Activated CD4-positive, alpha-beta memory T cell treated with anti-CD3 and anti-CD28 coated beads for 36 hours (primary cell): ENCODE measurements at regions of chr22 and their contacts with region 1.

Region 1: DNA sequence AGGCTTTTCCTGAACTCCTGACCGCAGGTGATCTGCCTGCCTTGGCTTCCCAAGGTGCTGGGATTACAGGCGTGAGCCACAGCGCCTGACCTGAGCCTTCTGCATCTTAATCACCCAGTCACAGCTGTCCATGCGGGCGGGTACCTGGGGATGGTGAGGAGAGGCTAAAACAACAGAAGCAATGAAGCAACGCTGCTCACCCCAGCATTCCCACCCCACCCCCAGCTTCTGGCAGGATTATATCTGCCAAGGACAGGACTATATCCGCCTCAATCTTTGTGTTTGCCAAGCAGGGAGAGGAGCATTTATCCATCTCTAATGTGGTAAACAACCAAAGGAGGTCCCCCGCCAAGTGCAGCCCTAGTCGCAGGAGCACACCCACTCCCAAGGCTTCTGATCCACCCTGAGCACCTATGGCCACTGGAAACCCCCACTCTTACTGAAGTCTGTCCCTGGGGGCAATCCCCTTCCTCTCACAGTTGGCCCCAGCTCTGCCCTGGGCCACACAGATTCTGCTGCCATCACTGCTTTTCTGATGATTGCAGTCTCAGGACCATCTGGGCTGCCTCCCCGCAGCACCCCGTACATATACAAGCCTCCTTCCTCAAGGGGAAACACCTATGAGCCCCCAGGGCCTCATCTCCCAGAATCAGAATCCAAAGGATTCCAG is 8.8 kb upstream of the LGALS2 start:
- DNase-seq: no peak
- H3K4me3 Mint-ChIP-seq: no peak overlapping the region
- H3K27ac Mint-ChIP-seq: no peak overlapping the region
- H3K4me1 Mint-ChIP-seq: peaks cover 10% of the 10 kb centered on the region
- H3K27me3 Mint-ChIP-seq: peaks cover 3% of the 10 kb centered on the region

Region 2: GRCh38 chr22:37472418-37473006 is 116.2 kb before region 1 on chr22:
- CTCF ChIA-PET with region 1: interaction called, 10 read pairs
- POLR2A ChIA-PET with region 1: no interaction called
- intact Hi-C with region 1: no loop called
- DNase-seq: peak; percentile 52
- H3K4me3 Mint-ChIP-seq: no peak overlapping the region
- H3K27ac Mint-ChIP-seq: peak overlapping the region; percentile 49
- H3K4me1 Mint-ChIP-seq: no peaks in the 10 kb centered on the region
- H3K27me3 Mint-ChIP-seq: no peaks in the 10 kb centered on the region

Region 3: DNA sequence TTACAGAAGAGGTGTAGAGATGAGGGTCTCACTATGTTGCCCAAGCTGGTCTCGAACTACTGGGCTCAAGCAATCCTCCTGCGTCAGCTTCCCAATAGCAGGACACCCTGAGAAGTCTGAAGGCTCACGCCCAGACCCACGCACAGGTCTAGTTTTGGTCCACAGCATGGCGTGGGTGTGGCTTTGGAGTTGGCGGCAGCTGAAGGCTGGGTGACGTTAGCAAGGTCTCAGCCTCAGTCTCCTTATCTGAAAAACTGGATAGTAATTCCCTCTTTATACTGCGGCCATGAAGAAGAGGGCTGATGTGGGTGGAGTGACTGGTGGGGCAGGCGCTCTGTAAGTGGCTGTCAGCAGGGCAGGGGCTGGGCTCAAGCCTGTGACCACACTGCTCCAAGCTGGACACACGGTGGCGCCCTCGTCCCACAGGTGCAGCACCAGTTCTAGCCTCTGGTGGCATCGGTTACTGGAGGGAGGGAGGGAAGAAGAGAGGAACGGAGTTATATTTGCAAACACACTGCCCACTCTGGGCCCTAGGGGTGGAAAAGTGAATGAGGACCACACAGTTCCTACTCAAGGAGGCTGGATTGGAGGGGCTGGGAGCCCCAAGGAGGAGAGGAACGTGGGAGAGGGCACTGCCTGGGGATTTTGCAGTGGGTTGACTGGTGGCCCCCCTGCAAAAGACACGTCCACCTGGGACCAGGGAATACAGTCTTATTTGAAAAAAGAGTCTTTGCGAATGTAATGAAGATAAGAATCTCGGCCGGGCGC is 49.9 kb before region 1 on chr22:
- CTCF ChIA-PET with region 1: interaction called, 81 read pairs
- POLR2A ChIA-PET with region 1: interaction called, 5 read pairs
- intact Hi-C with region 1: loop called (anchors 1 kb)
- DNase-seq: peak; percentile 96
- H3K4me3 Mint-ChIP-seq: peak overlapping the region; percentile 34
- H3K27ac Mint-ChIP-seq: peak overlapping the region; percentile 57
- H3K4me1 Mint-ChIP-seq: peaks cover 42% of the 10 kb centered on the region
- H3K27me3 Mint-ChIP-seq: peaks cover 22% of the 10 kb centered on the region

Region 4: DNA sequence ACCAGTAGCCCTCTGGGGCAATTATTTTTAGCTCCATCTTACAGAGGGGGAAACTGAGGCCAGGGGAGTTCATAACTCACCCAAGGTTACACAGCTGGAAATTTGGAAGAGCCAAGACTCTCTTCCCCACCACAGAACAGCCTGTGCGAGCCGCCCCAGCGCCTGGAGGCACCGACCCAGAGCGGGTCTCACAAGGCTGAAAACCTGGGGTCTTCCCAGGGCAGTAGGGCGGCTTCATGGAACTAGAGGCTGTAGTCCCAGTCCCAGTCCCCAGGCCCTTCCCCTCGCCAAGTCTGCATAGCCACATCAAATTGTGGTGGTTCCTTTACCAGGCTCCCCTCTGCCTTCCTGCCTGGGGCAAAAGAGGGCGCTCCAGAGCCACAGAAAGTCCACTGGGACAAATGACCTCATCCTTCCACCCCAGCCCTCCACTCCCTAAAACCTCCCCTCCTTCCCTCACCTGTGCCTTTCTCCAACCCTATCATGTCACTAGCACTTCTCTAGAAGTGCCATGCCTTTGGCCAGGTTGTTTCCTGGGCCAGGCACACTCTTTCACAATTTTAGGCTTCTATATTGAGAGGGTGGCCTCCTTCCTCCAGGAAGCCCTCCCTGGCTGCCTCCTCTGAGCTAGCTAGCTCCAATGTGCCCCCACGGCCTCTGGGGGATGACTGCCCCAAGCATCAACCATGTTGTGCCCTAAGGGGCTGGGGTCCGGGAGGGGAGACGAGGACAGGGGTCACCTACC is 43.6 kb before region 1 on chr22:
- CTCF ChIA-PET with region 1: interaction called, 81 read pairs
- POLR2A ChIA-PET with region 1: interaction called, 9 read pairs
- intact Hi-C with region 1: no loop called
- DNase-seq: peak; percentile 83
- H3K4me3 Mint-ChIP-seq: no peak overlapping the region
- H3K27ac Mint-ChIP-seq: no peak overlapping the region
- H3K4me1 Mint-ChIP-seq: peaks cover 28% of the 10 kb centered on the region
- H3K27me3 Mint-ChIP-seq: peaks cover 12% of the 10 kb centered on the region

Region 5: DNA sequence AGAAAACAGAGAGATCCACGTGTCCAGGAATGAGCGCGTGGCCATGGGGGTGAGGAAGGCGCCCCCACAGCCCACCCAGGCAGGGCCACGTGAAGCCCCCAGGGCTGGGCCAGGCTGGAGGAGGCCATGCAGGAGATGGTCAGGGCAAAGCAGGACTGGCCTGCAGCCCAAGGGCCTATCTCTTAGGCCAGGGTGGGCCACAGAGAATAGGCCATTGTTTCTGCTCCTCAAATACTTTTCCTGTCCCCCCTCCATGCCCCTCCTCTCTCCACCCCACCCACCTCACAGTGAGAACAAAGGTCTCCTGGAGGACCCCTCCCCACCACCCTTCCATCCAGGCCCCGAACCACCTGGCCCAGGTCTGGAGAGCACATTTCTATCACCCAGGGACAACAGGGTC is 36.7 kb before region 1 on chr22:
- CTCF ChIA-PET with region 1: interaction called, 12 read pairs
- POLR2A ChIA-PET with region 1: no interaction called
- intact Hi-C with region 1: no loop called
- DNase-seq: no peak
- H3K4me3 Mint-ChIP-seq: no peak overlapping the region
- H3K27ac Mint-ChIP-seq: no peak overlapping the region
- H3K4me1 Mint-ChIP-seq: no peaks in the 10 kb centered on the region
- H3K27me3 Mint-ChIP-seq: peaks cover 22% of the 10 kb centered on the region

Region 6: GRCh38 chr22:37561212-37562048 is 27.3 kb before region 1 on chr22:
- CTCF ChIA-PET with region 1: interaction called, 83 read pairs
- POLR2A ChIA-PET with region 1: interaction called, 8 read pairs
- intact Hi-C with region 1: no loop called
- DNase-seq: peak; percentile 91
- H3K4me3 Mint-ChIP-seq: peak overlapping the region; percentile 54
- H3K27ac Mint-ChIP-seq: no peak overlapping the region
- H3K4me1 Mint-ChIP-seq: peaks cover 29% of the 10 kb centered on the region
- H3K27me3 Mint-ChIP-seq: peaks cover 48% of the 10 kb centered on the region

Region 7: DNA sequence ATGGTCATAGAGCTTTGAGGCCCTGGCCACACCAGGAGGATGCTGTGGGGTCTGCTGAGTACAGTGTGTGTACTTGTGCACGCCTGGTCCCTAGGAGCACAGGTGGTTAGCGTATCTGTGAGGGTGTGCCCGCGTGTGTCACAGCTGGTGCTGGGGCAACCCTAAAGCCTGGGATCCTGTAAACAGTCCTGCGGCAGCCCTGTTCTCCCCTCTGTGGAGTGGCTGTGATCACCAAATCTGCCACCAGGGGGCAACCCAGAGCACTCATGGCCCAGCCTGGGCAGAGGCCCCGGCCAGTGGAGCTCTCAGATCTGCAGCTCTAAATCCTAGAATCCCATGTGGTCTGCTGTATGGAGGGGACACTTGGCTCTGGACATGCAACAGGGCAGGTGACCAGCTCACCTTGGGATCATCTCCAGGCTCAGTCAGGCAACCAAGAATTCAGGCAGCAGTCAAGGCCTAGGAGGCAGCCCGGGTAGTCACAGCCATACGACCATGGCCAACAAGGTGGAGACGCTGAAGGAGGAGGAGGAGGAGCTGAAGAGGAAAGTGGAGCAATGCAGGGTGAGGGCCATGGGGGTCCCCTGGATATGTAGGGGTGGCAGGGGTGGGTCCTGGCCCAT is 54.7 kb after region 1 on chr22:
- CTCF ChIA-PET with region 1: interaction called, 11 read pairs
- POLR2A ChIA-PET with region 1: no interaction called
- intact Hi-C with region 1: no loop called
- DNase-seq: peak; percentile 91
- H3K4me3 Mint-ChIP-seq: peak overlapping the region; percentile 29
- H3K27ac Mint-ChIP-seq: peak overlapping the region; percentile 76
- H3K4me1 Mint-ChIP-seq: peaks cover 32% of the 10 kb centered on the region
- H3K27me3 Mint-ChIP-seq: no peaks in the 10 kb centered on the region

Region 8: GRCh38 chr22:37752466-37753087 is 163.9 kb after region 1 on chr22:
- CTCF ChIA-PET with region 1: no interaction called
- POLR2A ChIA-PET with region 1: no interaction called
- intact Hi-C with region 1: no loop called
- DNase-seq: no peak
- H3K4me3 Mint-ChIP-seq: no peak overlapping the region
- H3K27ac Mint-ChIP-seq: no peak overlapping the region
- H3K4me1 Mint-ChIP-seq: peaks cover 10% of the 10 kb centered on the region
- H3K27me3 Mint-ChIP-seq: no peaks in the 10 kb centered on the region